ENCODE measurements at regions of chr17 and their contacts with region 1.

Region 1: DNA sequence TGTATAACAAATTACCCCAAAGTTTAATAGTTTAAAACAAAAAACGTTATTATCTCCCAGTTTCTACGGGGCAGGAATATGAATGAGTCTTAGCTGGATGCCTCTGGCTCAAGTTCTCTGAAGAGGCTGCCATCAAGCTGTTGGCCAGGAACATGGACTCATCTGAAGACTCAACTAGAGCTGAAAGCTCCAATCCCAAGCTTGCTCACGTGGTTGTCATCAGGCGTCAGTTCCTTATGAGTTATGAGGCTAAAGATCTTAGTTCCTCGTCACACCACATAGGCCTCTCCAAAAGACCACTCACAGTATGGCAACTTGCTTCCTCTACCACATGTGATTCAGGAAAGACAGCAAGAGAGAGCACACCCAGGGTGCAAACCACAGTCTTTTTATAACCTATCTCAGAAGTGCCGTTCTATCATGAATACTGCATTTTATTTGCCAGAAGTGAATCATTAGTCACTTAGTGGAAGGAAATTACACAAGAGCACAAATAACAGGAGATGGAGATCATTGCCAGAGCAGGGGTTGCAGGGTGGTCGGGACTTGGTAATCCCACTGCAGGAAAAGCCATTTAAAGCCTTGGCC is 48.7 kb upstream of the NLK start:
- DNase-seq: no peak
- ATAC-seq: no peak
- H3K4me3 ChIP-seq: no peak overlapping the region
- H3K27ac ChIP-seq: no peak overlapping the region
- H3K4me1 ChIP-seq: no peaks in the 10 kb centered on the region
- H3K27me3 ChIP-seq: no peaks in the 10 kb centered on the region
- CTCF ChIP-seq: no peak
- POLR2A ChIP-seq: no peak

Region 2: DNA sequence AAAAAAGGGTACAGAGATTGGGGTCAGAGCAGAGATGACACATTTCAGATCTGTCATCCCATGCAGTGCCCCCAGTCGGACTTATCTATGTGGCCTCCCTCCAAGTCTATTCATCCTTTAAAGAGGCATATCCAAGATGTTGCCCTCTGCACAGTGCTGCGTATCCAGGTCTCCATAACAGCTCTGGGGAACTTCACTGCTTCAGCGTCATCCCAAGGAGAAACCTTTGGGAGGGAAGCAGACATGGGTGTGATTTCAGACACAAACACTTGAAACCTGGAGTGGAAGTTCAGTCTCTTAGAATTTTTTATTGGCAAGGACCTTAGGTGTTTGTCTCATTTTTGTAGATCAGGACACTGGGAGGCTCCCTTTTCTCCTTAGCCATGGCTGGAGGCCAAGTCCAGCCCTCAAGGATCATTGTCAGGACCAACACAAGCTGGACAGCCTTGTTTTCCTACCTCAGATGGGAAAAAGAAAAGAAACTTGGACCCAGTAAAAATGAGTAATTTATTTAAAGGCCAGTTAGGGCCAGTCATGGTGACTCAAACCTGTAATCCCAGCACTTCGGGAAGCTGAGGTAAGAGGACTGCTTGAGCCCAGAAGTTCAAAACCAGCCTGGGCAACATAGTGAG is 24.7 kb after region 1 on chr17:
- in situ Hi-C with region 1: no loop called
- intact Hi-C with region 1: loop called (anchors 2 kb)
- DNase-seq: no peak
- ATAC-seq: peak in 1 of 2 donors; percentile 26
- H3K4me3 ChIP-seq: no peak overlapping the region
- H3K27ac ChIP-seq: peak overlapping the region in 1 of 4 donors; percentile 28
- H3K4me1 ChIP-seq: no peaks in the 10 kb centered on the region
- H3K27me3 ChIP-seq: no peaks in the 10 kb centered on the region
- CTCF ChIP-seq: no peak
- POLR2A ChIP-seq: no peak

Region 3: DNA sequence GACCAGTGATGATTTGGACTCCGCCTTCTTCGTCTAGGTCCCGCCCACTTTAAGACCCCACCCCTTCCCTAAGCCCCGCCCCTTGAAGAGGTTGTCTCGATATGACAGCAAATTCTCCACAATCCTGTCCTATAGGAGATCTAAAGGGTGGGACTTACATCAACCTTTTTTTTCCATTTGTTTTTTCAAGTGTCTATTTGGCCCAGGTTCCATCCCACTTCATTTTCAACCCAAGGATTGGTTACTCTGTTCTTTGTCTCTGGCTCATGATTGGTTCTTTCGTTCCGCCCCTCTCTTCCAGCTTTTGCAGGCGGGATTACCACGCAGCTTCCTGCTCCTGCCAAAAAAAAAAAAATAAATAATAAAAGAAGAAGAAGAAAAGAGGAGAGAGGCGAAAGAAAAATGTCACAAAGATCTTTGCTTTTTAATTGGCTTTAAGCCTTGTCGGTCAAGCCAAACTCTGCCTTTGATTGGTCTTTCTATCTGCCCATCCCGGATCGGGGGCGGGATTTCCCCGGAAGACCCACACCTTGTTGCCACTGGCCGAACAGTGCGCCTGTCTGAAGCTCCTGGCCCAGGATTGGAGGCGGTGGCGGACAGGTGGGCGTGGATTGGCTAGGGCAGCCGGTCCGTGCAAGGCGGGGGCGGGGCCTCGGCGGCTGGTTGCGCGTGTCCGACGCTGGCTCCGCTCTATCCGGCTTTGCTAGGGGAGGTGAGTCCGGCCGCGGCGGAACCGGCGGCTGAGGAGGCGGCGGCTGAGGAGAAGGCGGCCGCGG is 47.4 kb after region 1 on chr17:
- in situ Hi-C with region 1: no loop called
- intact Hi-C with region 1: no loop called
- DNase-seq: peak; percentile 100
- ATAC-seq: peak; percentile 94 to 97
- H3K4me3 ChIP-seq: peak overlapping the region; percentile 80 to 97 (median 86)
- H3K27ac ChIP-seq: peak overlapping the region; percentile 89 to 95 (median 92)
- H3K4me1 ChIP-seq: peaks cover 36 to 38% of the 10 kb centered on the region in 2 donors
- H3K27me3 ChIP-seq: no peaks in the 10 kb centered on the region
- CTCF ChIP-seq: no peak
- POLR2A ChIP-seq: peak; percentile 59 to 72

Measured in gastrocnemius medialis (tissue), 4 donors.